Posterior vena cava (tissue), 2 donors: ENCODE measurements at regions of chr9 and their contacts with region 1.

Region 1: GRCh38 chr9:136400038-136400834 is at the start of gene SNAPC4:
- DNase-seq: peak; percentile 96
- total RNA-seq, gene SNAPC4: 4.7 to 4.9 TPM

Region 2: GRCh38 chr9:135198586-135199285 is 1201.5 kb before region 1 on chr9:
- intact Hi-C with region 1: no loop called
- DNase-seq: no peak

Region 3: DNA sequence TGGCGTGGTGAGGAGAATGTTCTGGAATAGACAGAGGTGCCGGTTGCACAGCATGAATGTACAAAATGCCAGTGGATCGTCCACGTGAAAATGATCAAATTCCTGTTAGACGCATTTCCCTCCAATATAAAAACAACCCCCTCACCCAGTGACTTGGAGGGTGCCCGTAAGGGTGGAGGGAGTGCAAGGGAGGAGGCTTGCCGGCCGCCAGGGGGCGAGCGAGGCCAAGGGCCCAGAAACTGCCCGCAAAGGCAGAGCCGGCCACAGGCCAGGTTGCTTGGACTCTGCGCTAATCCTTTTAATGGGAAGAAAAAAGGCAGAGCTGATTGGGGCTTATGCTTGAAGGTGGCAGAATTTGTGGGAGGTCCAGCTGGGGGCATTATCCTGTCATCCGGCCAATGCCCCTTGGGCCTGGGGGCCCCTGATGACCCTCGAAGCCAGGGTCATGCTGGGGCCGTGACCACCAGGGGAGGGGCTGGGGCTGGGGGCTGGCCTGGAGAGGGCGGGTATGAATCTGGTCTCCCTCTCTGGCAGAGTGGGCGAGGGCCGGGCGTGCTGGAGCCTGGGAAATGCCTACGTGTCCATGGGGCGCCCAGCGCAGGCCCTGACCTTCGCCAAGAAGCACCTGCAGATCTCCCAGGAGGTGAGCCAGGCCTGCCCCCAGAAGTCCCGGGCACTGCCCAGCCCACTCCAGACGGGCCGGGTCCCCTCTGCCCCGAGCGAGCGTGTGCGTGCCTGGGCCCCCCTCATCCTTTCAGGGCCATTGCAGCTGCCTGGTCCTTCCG is 60.9 kb before region 1 on chr9:
- intact Hi-C with region 1: loop called in 1 of 2 experiments (anchors 5 kb)
- DNase-seq: peak; percentile 92